Activated naive CD4-positive, alpha-beta T cell treated with anti-CD3 and anti-CD28 coated beads for 36 hours (primary cell): ENCODE measurements at regions of chr3 and their contacts with region 1.

Region 1: GRCh38 chr3:42819351-42819965 is 10.2 kb downstream of the ACKR2 start:
- DNase-seq: no peak
- H3K4me3 Mint-ChIP-seq: no peak overlapping the region
- H3K27ac Mint-ChIP-seq: no peak overlapping the region
- H3K4me1 Mint-ChIP-seq: no peaks in the 10 kb centered on the region
- H3K27me3 Mint-ChIP-seq: no peaks in the 10 kb centered on the region

Region 2: GRCh38 chr3:42264399-42265058 is 554.9 kb before region 1 on chr3:
- CTCF ChIA-PET with region 1: no interaction called
- intact Hi-C with region 1: no loop called
- DNase-seq: peak; percentile 48
- H3K4me3 Mint-ChIP-seq: peak overlapping the region; percentile 30
- H3K27ac Mint-ChIP-seq: no peak overlapping the region
- H3K4me1 Mint-ChIP-seq: peaks cover 9% of the 10 kb centered on the region
- H3K27me3 Mint-ChIP-seq: peaks cover 64% of the 10 kb centered on the region

Region 3: GRCh38 chr3:42459151-42459550 is 360.3 kb before region 1 on chr3:
- CTCF ChIA-PET with region 1: no interaction called
- intact Hi-C with region 1: no loop called
- DNase-seq: no peak
- H3K4me3 Mint-ChIP-seq: no peak overlapping the region
- H3K27ac Mint-ChIP-seq: no peak overlapping the region
- H3K4me1 Mint-ChIP-seq: no peaks in the 10 kb centered on the region
- H3K27me3 Mint-ChIP-seq: peaks cover 4% of the 10 kb centered on the region

Region 4: DNA sequence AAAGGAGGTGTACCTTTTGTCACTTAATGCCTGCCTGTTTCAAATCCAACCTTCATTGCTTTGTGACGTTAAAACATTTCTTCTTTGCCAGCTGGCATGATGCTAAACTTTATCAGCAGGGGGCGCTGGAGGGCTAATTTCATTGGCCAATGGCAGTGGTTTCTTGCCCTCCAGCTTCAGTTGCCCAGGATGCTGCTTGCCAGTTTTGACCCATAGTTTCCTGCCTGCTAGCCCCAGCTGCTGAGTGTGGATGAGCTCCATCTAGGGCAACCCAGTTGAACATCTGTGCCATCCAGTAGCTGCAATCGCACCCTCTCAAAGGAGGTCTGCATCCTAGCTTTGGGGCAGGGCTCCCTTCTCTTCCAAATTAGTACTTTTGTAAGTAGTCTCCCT is 11.9 kb after region 1 on chr3:
- CTCF ChIA-PET with region 1: interaction called, 11 read pairs
- intact Hi-C with region 1: no loop called
- DNase-seq: peak; percentile 92
- H3K4me3 Mint-ChIP-seq: no peak overlapping the region
- H3K27ac Mint-ChIP-seq: no peak overlapping the region
- H3K4me1 Mint-ChIP-seq: no peaks in the 10 kb centered on the region
- H3K27me3 Mint-ChIP-seq: no peaks in the 10 kb centered on the region